AG04450 (cell line): ENCODE measurements at regions of chr7 and their contacts with region 1.

Region 1: DNA sequence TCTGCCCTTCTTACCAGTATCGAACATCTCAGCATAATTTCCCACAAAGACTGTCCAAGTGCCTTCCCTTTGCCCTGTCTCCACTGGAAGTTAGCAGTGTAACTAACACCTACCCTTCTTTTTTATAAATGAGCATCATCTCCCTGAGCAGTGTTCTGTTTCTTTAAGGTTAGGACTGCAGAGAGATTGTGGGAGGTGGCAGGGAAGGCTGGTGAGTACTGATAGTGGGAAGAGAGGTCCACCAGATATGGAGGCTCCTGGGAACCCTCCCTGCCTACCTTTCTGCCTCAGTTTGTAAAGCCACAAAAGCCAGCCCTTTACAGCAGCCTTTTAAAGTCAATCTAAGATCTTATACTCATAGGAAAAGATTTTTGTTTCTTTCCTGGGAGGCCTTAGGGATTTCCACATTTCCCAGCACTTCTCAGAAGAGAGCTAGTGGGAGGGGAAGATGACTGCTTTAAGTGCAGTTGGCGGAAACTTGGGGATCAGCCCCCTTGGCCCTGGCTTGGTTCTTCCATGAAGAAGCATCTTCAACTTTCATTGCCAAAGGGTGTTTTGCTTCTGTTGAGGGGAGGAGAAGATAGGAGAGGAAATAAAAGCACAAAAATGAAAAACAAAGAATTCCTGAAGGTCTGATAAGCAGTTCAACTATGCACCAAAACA is 36.6 kb upstream of the CALD1 start:
- DNase-seq: no peak
- H3K4me3 ChIP-seq: no peak overlapping the region; the same call in 1 of the 2 replicates
- H3K27ac ChIP-seq: peak overlapping the region; percentile 92
- H3K27me3 ChIP-seq: no peaks in the 10 kb centered on the region
- CTCF ChIP-seq: no peak

Region 2: GRCh38 chr7:134755401-134756022 is 12.7 kb after region 1 on chr7:
- CTCF ChIA-PET with region 1: interaction called, 24 read pairs
- POLR2A ChIA-PET with region 1: no interaction called
- DNase-seq: no peak
- H3K4me3 ChIP-seq: no peak overlapping the region
- H3K27ac ChIP-seq: no peak overlapping the region
- H3K27me3 ChIP-seq: no peaks in the 10 kb centered on the region
- CTCF ChIP-seq: peak; percentile 83